B cell (primary cell): ENCODE measurements at regions of chr10 and their contacts with region 1.

Region 1: DNA sequence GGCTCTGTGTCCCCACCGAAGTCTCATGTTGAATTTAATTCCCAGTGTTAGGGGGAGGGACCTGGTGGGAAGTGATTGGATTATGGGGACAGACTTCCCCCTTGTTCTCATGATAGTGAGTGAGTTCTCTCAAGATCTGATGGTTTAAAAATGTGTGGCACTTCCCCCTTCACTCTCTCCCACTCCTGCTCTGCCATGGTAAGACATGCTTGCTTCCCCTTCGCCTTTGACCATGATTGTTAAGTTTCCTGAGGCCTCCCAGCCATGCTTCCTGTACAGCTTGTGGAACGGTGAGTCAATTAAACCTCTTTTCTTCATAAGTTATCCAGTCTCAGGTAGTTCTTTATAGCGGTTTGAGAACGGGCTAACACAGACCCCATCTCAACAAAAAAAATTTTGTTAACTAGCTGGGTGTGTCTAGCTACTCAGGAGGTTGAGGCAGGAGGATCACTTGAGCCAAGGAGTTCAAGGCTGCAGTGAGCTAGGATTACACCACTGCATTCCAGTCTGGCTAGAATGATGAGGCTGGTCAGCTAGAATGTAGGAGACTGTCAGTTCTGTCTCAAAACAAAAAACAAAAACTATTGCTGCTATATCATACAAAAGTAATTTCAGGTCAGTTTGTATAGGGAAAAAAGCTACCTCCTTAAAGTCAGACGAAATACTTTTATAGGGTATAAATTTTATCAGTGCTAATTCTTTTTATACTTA is 57.7 kb downstream of the ATAD1 start:
- DNase-seq: no peak
- ATAC-seq: no peak
- H3K4me3 ChIP-seq: no peak overlapping the region
- H3K4me3 Mint-ChIP-seq: no peak overlapping the region
- H3K27ac ChIP-seq: no peak overlapping the region
- H3K27ac Mint-ChIP-seq: no peak overlapping the region
- H3K4me1 ChIP-seq: no peaks in the 10 kb centered on the region
- H3K4me1 Mint-ChIP-seq: peaks cover 3% of the 10 kb centered on the region
- H3K27me3 ChIP-seq: no peaks in the 10 kb centered on the region
- H3K27me3 Mint-ChIP-seq: no peaks in the 10 kb centered on the region
- CTCF ChIP-seq: no peak

Region 2: DNA sequence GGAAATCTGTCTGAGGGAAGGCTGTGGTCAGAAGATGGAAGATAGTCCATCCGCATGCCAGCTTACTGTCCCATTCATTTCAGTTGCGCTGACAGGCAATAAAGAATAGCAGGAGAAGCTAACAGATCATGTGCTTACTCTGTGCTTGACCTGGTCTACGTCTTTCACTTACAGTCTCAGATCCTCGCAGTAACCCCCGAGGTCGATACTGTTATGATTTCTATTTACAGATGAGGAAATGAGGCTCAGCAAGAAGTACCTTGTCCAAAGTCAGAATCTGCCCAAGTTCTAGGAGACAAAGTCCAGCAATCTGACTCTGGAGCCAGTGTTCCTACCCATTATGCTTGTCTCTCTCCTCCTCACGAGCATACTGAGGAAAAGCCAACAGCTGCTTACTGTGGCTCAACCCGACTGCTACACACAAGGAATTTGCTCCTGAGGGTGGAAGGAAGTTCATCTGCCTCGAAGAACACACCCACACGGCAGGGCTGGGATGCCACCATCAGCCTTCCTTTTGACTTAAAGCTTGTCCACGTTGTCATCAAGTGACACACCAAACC is 181.4 kb before region 1 on chr10:
- CTCF ChIA-PET with region 1: no interaction called
- POLR2A ChIA-PET with region 1: no interaction called
- intact Hi-C with region 1: no loop called
- DNase-seq: no peak
- ATAC-seq: no peak
- H3K4me3 ChIP-seq: no peak overlapping the region
- H3K4me3 Mint-ChIP-seq: no peak overlapping the region
- H3K27ac ChIP-seq: no peak overlapping the region
- H3K27ac Mint-ChIP-seq: no peak overlapping the region
- H3K4me1 ChIP-seq: no peaks in the 10 kb centered on the region
- H3K4me1 Mint-ChIP-seq: no peaks in the 10 kb centered on the region
- H3K27me3 ChIP-seq: no peaks in the 10 kb centered on the region
- H3K27me3 Mint-ChIP-seq: peaks cover 24% of the 10 kb centered on the region
- CTCF ChIP-seq: no peak

Region 3: GRCh38 chr10:87750001-87750671 is 10.2 kb before region 1 on chr10:
- CTCF ChIA-PET with region 1: interaction called, 10 read pairs
- POLR2A ChIA-PET with region 1: no interaction called
- intact Hi-C with region 1: no loop called
- DNase-seq: no peak
- ATAC-seq: no peak
- H3K4me3 ChIP-seq: no peak overlapping the region
- H3K4me3 Mint-ChIP-seq: no peak overlapping the region
- H3K27ac ChIP-seq: no peak overlapping the region
- H3K27ac Mint-ChIP-seq: no peak overlapping the region
- H3K4me1 ChIP-seq: no peaks in the 10 kb centered on the region
- H3K4me1 Mint-ChIP-seq: no peaks in the 10 kb centered on the region
- H3K27me3 ChIP-seq: no peaks in the 10 kb centered on the region
- H3K27me3 Mint-ChIP-seq: no peaks in the 10 kb centered on the region
- CTCF ChIP-seq: no peak